Posterior vena cava (tissue), 2 donors: ENCODE measurements at regions of chr1 and their contacts with region 1.

Region 1: DNA sequence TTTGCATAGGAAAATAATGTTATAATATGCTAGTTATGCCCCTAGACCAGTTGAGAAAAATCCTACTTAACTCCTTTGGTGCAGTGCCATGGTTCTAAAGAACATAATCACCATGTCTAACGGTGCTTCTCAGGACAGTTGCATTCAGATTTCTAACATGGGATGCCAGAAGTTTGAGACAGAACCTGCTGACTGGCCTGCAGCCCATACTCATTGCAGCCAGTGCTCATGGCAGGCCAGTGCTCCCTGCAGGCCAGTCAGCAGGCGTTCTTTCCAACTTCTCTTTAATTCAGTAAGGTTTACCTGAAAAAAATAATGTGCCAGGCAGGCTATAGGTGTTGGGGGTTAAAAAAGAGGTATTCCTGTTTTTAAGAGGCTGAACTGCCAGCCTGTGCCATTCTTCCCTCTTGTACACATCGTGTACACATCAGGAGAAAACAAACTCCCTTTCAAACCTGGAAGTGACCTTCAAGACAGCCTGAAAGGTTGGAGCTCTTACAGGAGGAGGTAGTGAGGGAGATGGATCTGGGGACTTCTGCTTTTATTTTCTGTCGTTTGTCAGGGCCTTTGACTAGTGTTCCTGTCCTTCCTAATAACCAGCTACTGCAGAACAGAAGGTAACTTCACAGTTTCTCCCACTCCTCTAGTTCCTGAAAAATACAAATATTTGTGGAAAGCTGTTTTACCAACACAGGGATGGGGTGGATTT is 146.0 kb upstream of the MAGI3 start:
- DNase-seq: no peak

Region 2: DNA sequence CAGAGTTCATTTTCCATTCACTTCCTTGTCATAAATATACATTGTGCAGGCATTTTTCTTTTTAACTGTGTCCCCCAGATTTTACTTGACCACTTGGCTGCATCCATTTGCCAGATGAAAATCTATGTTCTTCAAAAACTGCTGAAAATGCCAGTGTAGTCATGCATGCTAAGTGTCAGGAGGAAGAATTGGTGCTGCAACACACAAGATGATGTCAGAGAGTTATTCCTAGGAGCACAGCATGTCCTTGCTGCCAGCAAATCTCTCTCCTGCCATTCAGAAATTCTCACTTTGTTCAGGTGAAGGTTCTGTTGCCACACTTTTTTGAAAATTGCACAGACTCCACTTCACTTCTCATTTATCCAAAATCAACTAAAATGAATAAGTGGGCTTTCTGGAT is 39.6 kb after region 1 on chr1:
- intact Hi-C with region 1: loop called in 1 of 2 experiments (anchors 2 kb)
- DNase-seq: no peak